Naive thymus-derived CD4-positive, alpha-beta T cell (primary cell): ENCODE measurements at regions of chr7 and their contacts with region 1.

Region 1: GRCh38 chr7:96075510-96076349 is 246.2 kb downstream of the SLC25A13 start:
- DNase-seq: peak; percentile 11 to 54 (median 48)
- ATAC-seq: peak; percentile 81
- H3K4me3 ChIP-seq: peak overlapping the region; percentile 58
- H3K4me3 Mint-ChIP-seq: peak overlapping the region; percentile 69 to 92 (median 86)
- H3K27ac ChIP-seq: no peak overlapping the region
- H3K27ac Mint-ChIP-seq: no peak overlapping the region
- H3K4me1 ChIP-seq: peaks cover 3 to 7% of the 10 kb centered on the region in 2 donors
- H3K4me1 Mint-ChIP-seq: peaks cover 6 to 12% (median 9%) of the 10 kb centered on the region in 7 donors
- H3K27me3 ChIP-seq: peaks cover 9 to 10% of the 10 kb centered on the region in 2 donors
- H3K27me3 Mint-ChIP-seq: peaks cover 49 to 60% (median 55%) of the 10 kb centered on the region in 5 donors

Region 2: GRCh38 chr7:96414931-96415292 is 339.2 kb after region 1 on chr7:
- CTCF ChIA-PET with region 1: no interaction called
- POLR2A ChIA-PET with region 1: no interaction called
- intact Hi-C with region 1: loop called in 1 of 2 experiments (anchors 1 kb)
- DNase-seq: peak in 6 of 9 donors; percentile 13 to 40 (median 24)
- ATAC-seq: peak; percentile 67
- H3K4me3 ChIP-seq: no peak overlapping the region
- H3K4me3 Mint-ChIP-seq: no peak overlapping the region
- H3K27ac ChIP-seq: no peak overlapping the region
- H3K27ac Mint-ChIP-seq: no peak overlapping the region
- H3K4me1 ChIP-seq: no peaks in the 10 kb centered on the region
- H3K4me1 Mint-ChIP-seq: peaks cover 0 to 7% (median 0%) of the 10 kb centered on the region in 7 donors
- H3K27me3 ChIP-seq: no peaks in the 10 kb centered on the region
- H3K27me3 Mint-ChIP-seq: peaks cover 5 to 24% (median 18%) of the 10 kb centered on the region in 5 donors

Region 3: GRCh38 chr7:97064967-97065587 is 989.3 kb after region 1 on chr7:
- CTCF ChIA-PET with region 1: no interaction called
- POLR2A ChIA-PET with region 1: no interaction called
- intact Hi-C with region 1: loop called (anchors 1 kb)
- DNase-seq: peak in 5 of 9 donors; percentile 8 to 44 (median 35)
- ATAC-seq: peak; percentile 77
- H3K4me3 ChIP-seq: no peak overlapping the region
- H3K4me3 Mint-ChIP-seq: no peak overlapping the region
- H3K27ac ChIP-seq: no peak overlapping the region
- H3K27ac Mint-ChIP-seq: no peak overlapping the region
- H3K4me1 ChIP-seq: no peaks in the 10 kb centered on the region
- H3K4me1 Mint-ChIP-seq: no peaks in the 10 kb centered on the region
- H3K27me3 ChIP-seq: no peaks in the 10 kb centered on the region
- H3K27me3 Mint-ChIP-seq: peaks cover 2 to 12% (median 7%) of the 10 kb centered on the region in 5 donors

Region 4: GRCh38 chr7:97835296-97836138 is 1759.8 kb after region 1 on chr7:
- CTCF ChIA-PET with region 1: no interaction called
- POLR2A ChIA-PET with region 1: no interaction called
- intact Hi-C with region 1: loop called in 1 of 2 experiments (anchors 10 kb)
- DNase-seq: peak; percentile 8 to 53 (median 37)
- ATAC-seq: peak; percentile 69
- H3K4me3 ChIP-seq: no peak overlapping the region
- H3K4me3 Mint-ChIP-seq: no peak overlapping the region
- H3K27ac ChIP-seq: no peak overlapping the region
- H3K27ac Mint-ChIP-seq: no peak overlapping the region
- H3K4me1 ChIP-seq: no peaks in the 10 kb centered on the region
- H3K4me1 Mint-ChIP-seq: peaks cover 0 to 2% (median 0%) of the 10 kb centered on the region in 7 donors
- H3K27me3 ChIP-seq: no peaks in the 10 kb centered on the region
- H3K27me3 Mint-ChIP-seq: peaks cover 24 to 41% (median 37%) of the 10 kb centered on the region in 5 donors